Activated T-helper 2 cell treated with anti-CD3 and anti-CD28 coated beads, Interferon-gamma antibody, Interleukin-2, Interleukin-4, amounts not matched to agents 10 μg/mL and 5 μg/mL and 100 μg/mL, durations not matched to agents 14 hours and 24 hours and 36 hours (primary cell): ENCODE measurements at regions of chr7 and their contacts with region 1.

Region 1: GRCh38 chr7:25894902-25895791 is 256.9 kb upstream of the NFE2L3 start:
- DNase-seq: peak; percentile 53
- H3K4me3 Mint-ChIP-seq: peak overlapping the region; percentile 53
- H3K27ac Mint-ChIP-seq: no peak overlapping the region
- H3K4me1 Mint-ChIP-seq: peaks cover 31% of the 10 kb centered on the region
- H3K27me3 Mint-ChIP-seq: peaks cover 7% of the 10 kb centered on the region

Region 2: GRCh38 chr7:25940086-25940906 is 45.1 kb after region 1 on chr7:
- intact Hi-C with region 1: loop called (anchors 2 kb)
- DNase-seq: no peak
- H3K4me3 Mint-ChIP-seq: peak overlapping the region; percentile 52
- H3K27ac Mint-ChIP-seq: peak overlapping the region; percentile 90
- H3K4me1 Mint-ChIP-seq: peaks cover 17% of the 10 kb centered on the region
- H3K27me3 Mint-ChIP-seq: peaks cover 16% of the 10 kb centered on the region

Region 3: DNA sequence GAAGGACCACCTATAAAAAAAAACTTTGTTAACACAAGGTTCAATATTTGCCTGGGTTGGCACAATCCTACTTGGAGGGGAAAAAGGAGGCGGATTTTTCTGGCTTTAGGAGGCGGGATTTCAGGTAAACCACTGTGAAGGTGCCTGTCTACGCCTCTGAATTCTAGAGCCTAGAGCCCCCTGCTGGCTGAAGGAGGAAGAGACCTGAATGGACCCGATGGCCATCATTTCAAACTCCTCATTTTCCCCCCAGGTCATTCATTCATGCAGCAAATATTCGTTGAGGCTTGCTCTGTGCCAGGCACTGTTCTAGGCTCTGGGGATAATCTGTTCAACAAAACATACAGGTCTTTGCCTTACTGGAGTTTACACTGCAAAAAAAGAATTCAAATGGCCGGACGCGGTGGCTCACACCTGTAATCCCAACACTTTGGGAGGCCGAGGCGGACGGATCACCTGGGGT is 166.6 kb after region 1 on chr7:
- intact Hi-C with region 1: loop called (anchors 1 kb)
- DNase-seq: peak; percentile 43
- H3K4me3 Mint-ChIP-seq: no peak overlapping the region
- H3K27ac Mint-ChIP-seq: no peak overlapping the region
- H3K4me1 Mint-ChIP-seq: peaks cover 17% of the 10 kb centered on the region
- H3K27me3 Mint-ChIP-seq: peaks cover 17% of the 10 kb centered on the region

Region 4: DNA sequence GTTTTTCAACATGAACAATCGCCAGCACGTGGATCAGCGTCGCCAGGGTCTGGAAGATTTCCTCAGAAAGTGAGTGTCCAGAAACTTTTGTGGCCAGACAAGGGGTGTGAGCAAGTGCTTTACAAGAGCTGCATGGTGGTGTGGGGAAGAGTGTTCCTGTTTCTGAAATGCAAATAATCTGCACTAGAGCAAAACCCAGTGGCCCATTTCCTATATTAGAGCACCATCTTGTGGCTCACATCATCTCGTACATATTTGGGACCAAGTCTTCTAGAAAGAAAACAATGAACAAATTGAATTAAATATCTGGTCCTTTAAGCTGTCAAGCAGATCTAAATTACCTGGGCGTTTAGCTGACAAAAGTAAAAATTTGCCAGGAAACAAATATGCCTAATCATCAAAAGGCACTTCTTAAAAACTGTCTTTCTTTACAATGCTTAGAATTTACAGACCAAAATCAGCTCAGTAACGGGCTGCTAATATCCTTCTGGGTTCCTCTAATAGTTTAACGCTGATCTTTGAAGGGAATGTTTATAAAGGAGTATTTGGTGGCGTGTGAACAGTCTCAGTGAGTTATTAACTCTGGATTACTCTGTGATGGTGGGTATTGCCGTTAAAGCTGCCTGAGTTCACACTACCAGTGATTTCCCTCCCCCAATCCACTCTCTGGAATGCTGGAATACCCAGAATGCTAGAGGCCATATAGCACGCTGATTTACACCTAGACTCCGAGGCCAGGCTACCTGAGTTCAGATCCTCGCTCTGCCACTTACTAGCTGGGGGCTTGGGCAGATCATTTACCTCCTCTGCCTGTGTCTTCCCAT is 470.1 kb after region 1 on chr7:
- intact Hi-C with region 1: loop called (anchors 1 kb)
- DNase-seq: peak; percentile 30
- H3K4me3 Mint-ChIP-seq: no peak overlapping the region
- H3K27ac Mint-ChIP-seq: peak overlapping the region; percentile 63
- H3K4me1 Mint-ChIP-seq: peaks cover 20% of the 10 kb centered on the region
- H3K27me3 Mint-ChIP-seq: no peaks in the 10 kb centered on the region

Region 5: DNA sequence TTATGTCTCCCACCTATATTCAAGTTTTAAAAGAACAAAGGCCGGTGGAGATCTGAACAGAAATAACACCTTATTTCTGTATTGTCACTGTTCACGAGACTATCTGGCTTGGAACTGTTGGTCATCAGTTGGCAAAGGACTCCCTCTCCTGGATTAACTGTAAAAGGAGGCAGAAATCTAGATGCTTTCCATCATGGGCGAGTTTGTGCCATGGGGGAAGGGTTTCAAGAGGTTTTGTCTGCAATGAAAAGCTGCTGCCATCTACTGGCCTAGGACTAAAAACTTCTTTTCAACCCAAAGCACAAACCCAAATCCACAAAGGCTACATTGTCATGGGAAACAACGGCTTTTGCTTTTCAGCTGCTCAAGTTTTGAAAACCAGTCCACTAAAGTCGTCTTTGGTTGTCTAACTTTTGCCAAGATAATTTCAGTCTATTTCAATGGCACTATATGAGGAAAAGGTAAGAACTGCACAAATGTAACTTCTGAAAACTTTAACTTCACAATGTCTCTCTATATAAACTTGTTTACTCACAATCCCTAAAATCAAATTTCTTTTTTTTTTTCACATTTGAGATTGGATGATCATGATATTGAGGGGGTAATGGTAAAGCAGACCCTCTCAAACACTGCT is 772.5 kb after region 1 on chr7:
- intact Hi-C with region 1: loop called (anchors 2 kb)
- DNase-seq: peak; percentile 52
- H3K4me3 Mint-ChIP-seq: no peak overlapping the region
- H3K27ac Mint-ChIP-seq: no peak overlapping the region
- H3K4me1 Mint-ChIP-seq: peaks cover 13% of the 10 kb centered on the region
- H3K27me3 Mint-ChIP-seq: peaks cover 41% of the 10 kb centered on the region